Calu3 (cell line): ENCODE measurements at regions of chr2 and their contacts with region 1.

Region 1: GRCh38 chr2:242010577-242011513 is 141.3 kb downstream of the RTP5 start:
- DNase-seq: no peak
- H3K4me3 Mint-ChIP-seq: no peak overlapping the region
- H3K27ac Mint-ChIP-seq: no peak overlapping the region
- H3K4me1 Mint-ChIP-seq: no peaks in the 10 kb centered on the region
- H3K27me3 Mint-ChIP-seq: peaks cover 22% of the 10 kb centered on the region
- CTCF ChIP-seq: no peak

Region 2: GRCh38 chr2:240655931-240656886 is 1354.6 kb before region 1 on chr2:
- CTCF ChIA-PET with region 1: no interaction called
- intact Hi-C with region 1: no loop called
- DNase-seq: no peak
- H3K4me3 Mint-ChIP-seq: no peak overlapping the region
- H3K27ac Mint-ChIP-seq: no peak overlapping the region
- H3K4me1 Mint-ChIP-seq: peaks cover 6% of the 10 kb centered on the region
- H3K27me3 Mint-ChIP-seq: peaks cover 81% of the 10 kb centered on the region
- CTCF ChIP-seq: no peak

Region 3: DNA sequence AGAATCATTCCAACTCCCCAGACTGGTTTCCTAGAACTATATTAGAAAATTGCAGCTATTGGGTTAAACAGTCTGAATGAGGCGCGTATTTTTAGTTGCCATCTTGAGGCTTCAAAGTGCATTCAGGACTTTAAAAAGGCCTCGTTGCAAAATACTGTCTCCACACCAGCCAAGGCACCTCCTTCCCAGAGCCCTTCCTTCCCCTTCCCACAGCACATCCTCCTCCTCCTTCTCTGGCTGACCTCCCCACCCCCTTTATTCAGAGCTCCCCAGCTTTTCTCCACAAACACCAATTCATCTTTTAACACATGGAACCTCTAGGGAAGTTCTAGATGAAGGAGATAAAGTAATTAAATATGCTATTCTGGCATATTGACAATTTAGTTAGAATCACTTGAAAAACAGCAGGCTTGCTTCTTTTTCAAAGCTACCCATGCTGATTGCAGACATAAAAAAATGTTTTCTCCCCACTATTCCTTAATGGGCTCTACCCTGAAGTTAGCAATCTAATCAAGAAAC is 51.0 kb before region 1 on chr2:
- CTCF ChIA-PET with region 1: no interaction called
- intact Hi-C with region 1: loop called (anchors 5 kb)
- DNase-seq: no peak
- H3K4me3 Mint-ChIP-seq: no peak overlapping the region
- H3K27ac Mint-ChIP-seq: no peak overlapping the region
- H3K4me1 Mint-ChIP-seq: no peaks in the 10 kb centered on the region
- H3K27me3 Mint-ChIP-seq: peaks cover 38% of the 10 kb centered on the region
- CTCF ChIP-seq: no peak